ENCODE measurements at regions of chrX and their contacts with region 1.

Region 1: DNA sequence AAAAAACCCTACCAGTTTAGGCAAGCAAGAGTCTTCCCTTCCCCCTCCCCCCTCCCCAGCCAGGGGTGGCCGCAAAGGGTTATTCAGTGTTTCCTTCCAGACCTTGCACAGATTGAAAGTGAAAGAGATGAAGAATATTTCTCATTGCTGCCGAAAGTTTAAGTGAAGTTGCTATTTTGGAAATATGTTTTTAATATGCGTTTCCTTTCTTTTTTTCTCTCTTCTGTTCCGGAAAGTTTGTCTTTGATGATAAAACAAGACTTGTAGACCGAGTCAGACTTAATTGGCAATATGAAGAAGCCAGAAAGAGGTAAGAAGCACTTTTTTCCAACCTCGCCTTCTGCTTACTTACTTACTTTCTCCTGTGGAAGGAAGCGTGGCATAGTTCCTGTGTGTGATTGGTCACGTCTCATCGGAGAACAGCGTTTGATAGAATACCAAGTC is 58.5 kb upstream of the CLCN4 start:
- DNase-seq: peak; percentile 68
- H3K4me3 Mint-ChIP-seq: peak overlapping the region; percentile 83
- H3K27ac Mint-ChIP-seq: peak overlapping the region; percentile 92
- H3K4me1 Mint-ChIP-seq: peaks cover 40% of the 10 kb centered on the region
- H3K27me3 Mint-ChIP-seq: no peaks in the 10 kb centered on the region

Region 2: GRCh38 chrX:10083809-10084208 is 14.5 kb before region 1 on chrX:
- CTCF ChIA-PET with region 1: interaction called, 5 read pairs
- POLR2A ChIA-PET with region 1: interaction called, 15 read pairs
- DNase-seq: no peak
- H3K4me3 Mint-ChIP-seq: no peak overlapping the region
- H3K27ac Mint-ChIP-seq: peak overlapping the region; percentile 95
- H3K4me1 Mint-ChIP-seq: peaks cover 46% of the 10 kb centered on the region
- H3K27me3 Mint-ChIP-seq: no peaks in the 10 kb centered on the region